ENCODE measurements at regions of chr5 and their contacts with region 1.

Region 1: DNA sequence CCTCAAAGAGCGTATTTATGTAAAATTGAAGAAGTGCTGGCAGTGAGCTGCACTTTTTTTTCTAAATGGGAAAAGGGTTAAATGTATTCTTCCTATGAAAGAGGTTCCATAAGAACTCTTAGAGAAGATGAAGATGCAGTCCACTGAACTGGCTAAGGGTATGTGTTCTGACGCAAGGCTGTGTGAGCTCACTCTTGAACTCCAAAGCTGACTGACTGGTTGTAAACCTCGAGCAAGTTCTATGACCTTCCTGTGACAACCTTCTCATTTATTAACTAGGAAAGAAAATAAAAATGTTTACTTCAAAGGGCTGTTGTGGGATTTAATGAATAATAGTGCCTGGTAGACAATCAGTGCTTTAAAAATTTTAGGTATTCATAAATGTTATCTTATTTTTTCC is 46.7 kb downstream of the POC5 start:
- DNase-seq: peak; percentile 28
- ATAC-seq: peak; percentile 34
- H3K4me3 ChIP-seq: no peak overlapping the region
- H3K27ac ChIP-seq: no peak overlapping the region
- H3K4me1 ChIP-seq: no peaks in the 10 kb centered on the region
- H3K27me3 ChIP-seq: no peaks in the 10 kb centered on the region
- CTCF ChIP-seq: no peak
- POLR2A ChIP-seq: no peak
- RAD21 ChIP-seq: no peak

Region 2: GRCh38 chr5:75426215-75426614 is 244.4 kb before region 1 on chr5:
- CTCF ChIA-PET with region 1: no interaction called
- POLR2A ChIA-PET with region 1: no interaction called
- dilution Hi-C with region 1: no loop called
- in situ Hi-C with region 1: no loop called
- intact Hi-C with region 1: loop called (anchors 5 kb)
- DNase-seq: no peak
- ATAC-seq: no peak
- H3K4me3 ChIP-seq: no peak overlapping the region
- H3K27ac ChIP-seq: no peak overlapping the region
- H3K4me1 ChIP-seq: no peaks in the 10 kb centered on the region; the same call in 1 of the 2 replicates
- H3K27me3 ChIP-seq: no peaks in the 10 kb centered on the region
- CTCF ChIP-seq: no peak
- POLR2A ChIP-seq: no peak
- RAD21 ChIP-seq: no peak

Measured in IMR-90 (cell line).